Activated CD4-positive, alpha-beta memory T cell treated with anti-CD3 and anti-CD28 coated beads, Interleukin-2, amount 10 ng/mL, durations not matched to agents 7 days and 5 days (primary cell): ENCODE measurements at regions of chr19 and their contacts with region 1.

Region 1: GRCh38 chr19:21328885-21329605 is at the start of gene ZNF708:
- DNase-seq: peak; percentile 84
- H3K4me3 Mint-ChIP-seq: peak within 1 kb of the TSS; percentile 97
- H3K27ac Mint-ChIP-seq: peak within 1 kb of the TSS; percentile 99
- H3K4me1 Mint-ChIP-seq: peaks cover 34% of the 10 kb centered on the region
- H3K27me3 Mint-ChIP-seq: no peaks in the 10 kb centered on the region
- total RNA-seq, gene ZNF708: 14.8 to 16.7 TPM

Region 2: GRCh38 chr19:20423381-20424197 is 905.5 kb before region 1 on chr19:
- CTCF ChIA-PET with region 1: no interaction called
- POLR2A ChIA-PET with region 1: interaction called, 13 read pairs
- DNase-seq: peak; percentile 42
- H3K4me3 Mint-ChIP-seq: peak overlapping the region; percentile 97
- H3K27ac Mint-ChIP-seq: peak overlapping the region; percentile 97
- H3K4me1 Mint-ChIP-seq: peaks cover 13% of the 10 kb centered on the region
- H3K27me3 Mint-ChIP-seq: no peaks in the 10 kb centered on the region

Region 3: DNA sequence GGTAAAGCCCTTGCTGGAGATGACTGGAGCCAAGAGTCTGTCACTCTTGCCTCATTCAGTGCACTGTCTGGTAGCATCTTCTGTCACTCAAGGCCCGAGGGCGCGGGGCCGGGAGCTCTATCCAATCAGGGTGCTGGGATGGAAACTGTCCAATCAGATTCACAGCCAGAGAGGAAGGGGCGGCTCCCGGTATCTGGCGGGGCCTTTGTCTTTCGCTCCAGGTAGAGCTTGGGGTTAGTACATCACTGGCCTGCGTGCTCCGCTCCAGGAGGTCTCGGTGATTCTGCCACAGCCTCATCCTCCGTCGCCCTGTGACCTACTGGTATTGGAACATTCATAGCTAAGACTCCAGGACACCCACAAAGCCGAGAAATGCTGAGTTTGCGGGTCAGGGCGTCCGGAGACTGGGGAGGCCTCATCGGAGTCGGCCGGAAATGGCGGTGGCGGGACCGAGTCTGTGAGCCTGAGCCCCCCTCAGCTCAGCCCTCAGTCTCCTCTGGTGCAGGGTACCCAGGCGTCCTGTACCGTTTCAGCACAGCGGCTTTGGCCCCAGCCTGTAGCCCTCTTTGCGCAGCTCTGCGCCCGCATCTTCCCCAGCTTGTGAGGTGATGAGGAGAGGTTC is 329.2 kb before region 1 on chr19:
- CTCF ChIA-PET with region 1: no interaction called
- POLR2A ChIA-PET with region 1: interaction called, 12 read pairs
- DNase-seq: peak; percentile 88
- H3K4me3 Mint-ChIP-seq: peak overlapping the region; percentile 85
- H3K27ac Mint-ChIP-seq: peak overlapping the region; percentile 79
- H3K4me1 Mint-ChIP-seq: peaks cover 20% of the 10 kb centered on the region
- H3K27me3 Mint-ChIP-seq: no peaks in the 10 kb centered on the region

Region 4: GRCh38 chr19:21141787-21142464 is 187.1 kb before region 1 on chr19 and contains the start of gene ZNF431:
- CTCF ChIA-PET with region 1: interaction called, 3 read pairs
- POLR2A ChIA-PET with region 1: interaction called, 21 read pairs
- DNase-seq: peak; percentile 93
- H3K4me3 Mint-ChIP-seq: peak within 1 kb of the TSS; percentile 96
- H3K27ac Mint-ChIP-seq: peak within 1 kb of the TSS; percentile 91
- H3K4me1 Mint-ChIP-seq: peaks cover 22% of the 10 kb centered on the region
- H3K27me3 Mint-ChIP-seq: no peaks in the 10 kb centered on the region
- total RNA-seq, gene ZNF431: 16.1 to 20.5 TPM

Region 5: GRCh38 chr19:21358768-21359451 is 29.9 kb after region 1 on chr19 and contains the start of gene ZNF738:
- CTCF ChIA-PET with region 1: interaction called, 4 read pairs
- POLR2A ChIA-PET with region 1: interaction called, 40 read pairs
- DNase-seq: peak; percentile 88
- H3K4me3 Mint-ChIP-seq: peak within 1 kb of the TSS; percentile 98
- H3K27ac Mint-ChIP-seq: peak within 1 kb of the TSS; percentile 96
- H3K4me1 Mint-ChIP-seq: peaks cover 10% of the 10 kb centered on the region
- H3K27me3 Mint-ChIP-seq: no peaks in the 10 kb centered on the region
- total RNA-seq, gene ZNF738: 10.5 to 11.2 TPM

Region 6: GRCh38 chr19:21767065-21767800 is 438.2 kb after region 1 on chr19 and contains the start of gene ZNF100:
- CTCF ChIA-PET with region 1: interaction called, 3 read pairs
- POLR2A ChIA-PET with region 1: interaction called, 12 read pairs
- DNase-seq: peak; percentile 88
- H3K4me3 Mint-ChIP-seq: peak within 1 kb of the TSS; percentile 93
- H3K27ac Mint-ChIP-seq: peak within 1 kb of the TSS; percentile 80
- H3K4me1 Mint-ChIP-seq: peaks cover 18% of the 10 kb centered on the region
- H3K27me3 Mint-ChIP-seq: no peaks in the 10 kb centered on the region
- total RNA-seq, gene ZNF100: 18.9 to 19.5 TPM

Region 7: GRCh38 chr19:22052644-22053013 is 723.6 kb after region 1 on chr19:
- CTCF ChIA-PET with region 1: no interaction called
- POLR2A ChIA-PET with region 1: interaction called, 10 read pairs
- DNase-seq: peak; percentile 31
- H3K4me3 Mint-ChIP-seq: peak overlapping the region; percentile 91
- H3K27ac Mint-ChIP-seq: peak overlapping the region; percentile 85
- H3K4me1 Mint-ChIP-seq: peaks cover 5% of the 10 kb centered on the region
- H3K27me3 Mint-ChIP-seq: no peaks in the 10 kb centered on the region